Naive thymus-derived CD4-positive, alpha-beta T cell (primary cell): ENCODE measurements at regions of chr1 and their contacts with region 1.

Region 1: DNA sequence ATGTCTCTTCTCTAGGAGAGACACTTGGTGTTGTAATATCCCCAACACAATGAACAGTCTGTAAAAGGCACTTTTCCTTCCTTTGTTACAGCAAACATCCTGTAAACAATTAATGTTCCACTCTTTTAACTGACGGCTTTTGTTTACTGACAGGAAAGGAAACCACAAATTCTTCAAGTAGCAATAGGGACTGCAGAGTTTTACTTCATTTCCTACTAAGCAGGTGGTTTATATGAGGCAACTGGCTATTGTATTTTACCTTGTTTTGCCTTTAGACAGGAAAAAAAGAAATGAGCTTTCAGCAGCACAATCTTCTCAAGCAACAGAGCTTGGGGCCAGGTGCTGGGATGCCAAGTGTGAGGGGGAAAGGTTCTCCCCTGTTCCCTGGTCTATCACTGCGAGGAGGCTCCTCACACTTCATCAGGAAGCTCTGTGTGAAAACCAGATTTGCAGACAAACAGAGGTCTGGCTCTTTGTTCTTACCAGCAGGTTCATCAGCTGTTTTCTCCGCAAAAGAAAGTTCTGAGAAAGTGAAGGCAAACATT is 51.2 kb downstream of the SIPA1L2 start:
- DNase-seq: peak in 5 of 9 donors; percentile 14 to 52 (median 21)
- ATAC-seq: peak; percentile 59
- H3K4me3 ChIP-seq: peak overlapping the region; percentile 31
- H3K4me3 Mint-ChIP-seq: peak overlapping the region; percentile 42 to 79 (median 60)
- H3K27ac ChIP-seq: peak overlapping the region; percentile 18
- H3K27ac Mint-ChIP-seq: peak overlapping the region; percentile 15 to 90 (median 49)
- H3K4me1 ChIP-seq: peaks cover 21 to 27% of the 10 kb centered on the region in 2 donors
- H3K4me1 Mint-ChIP-seq: peaks cover 19 to 54% (median 29%) of the 10 kb centered on the region in 7 donors
- H3K27me3 ChIP-seq: no peaks in the 10 kb centered on the region
- H3K27me3 Mint-ChIP-seq: peaks cover 0 to 5% (median 0%) of the 10 kb centered on the region in 5 donors

Region 2: DNA sequence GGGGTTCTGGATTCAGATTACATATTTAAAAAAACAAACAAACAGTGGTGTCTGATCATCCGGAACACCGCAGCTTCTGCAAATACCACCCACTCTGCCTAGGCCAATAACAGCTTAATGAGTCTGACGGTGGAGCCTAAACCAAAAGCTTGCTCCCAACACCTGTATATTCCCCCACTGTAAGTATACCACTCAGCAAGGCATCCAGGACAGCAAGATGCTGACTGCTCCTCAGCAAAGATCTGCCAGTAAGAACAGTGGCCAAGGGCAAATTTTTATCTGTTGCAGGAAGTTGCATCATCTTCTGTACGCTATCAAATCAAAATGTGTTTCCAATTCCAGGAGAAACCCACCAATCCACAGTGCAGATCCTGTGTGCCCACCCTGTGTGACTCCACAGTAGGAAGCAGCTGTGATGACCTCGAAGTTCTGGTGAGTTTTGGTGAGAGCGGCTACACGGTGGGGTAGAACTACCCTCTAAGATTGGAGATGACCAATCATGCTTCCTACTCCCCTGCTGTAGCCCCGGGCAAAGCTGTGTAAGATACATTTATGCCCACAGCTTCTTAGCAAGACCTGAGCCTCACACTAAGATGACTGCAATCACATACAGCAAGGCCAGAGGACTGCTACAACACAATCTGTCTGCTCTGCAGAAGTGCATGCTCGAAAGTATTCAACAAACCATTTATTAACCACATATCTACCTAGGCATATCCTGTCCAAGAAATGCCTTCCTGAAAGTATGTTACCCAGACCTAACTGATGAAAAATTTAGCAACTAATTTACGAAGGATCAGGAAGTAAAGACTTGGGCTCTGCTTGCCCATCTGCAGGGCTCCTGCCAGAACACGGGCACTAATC is 20.7 kb after region 1 on chr1:
- CTCF ChIA-PET with region 1: no interaction called
- POLR2A ChIA-PET with region 1: no interaction called
- intact Hi-C with region 1: loop called in 1 of 2 experiments (anchors 1 kb)
- DNase-seq: no peak
- ATAC-seq: peak; percentile 27
- H3K4me3 ChIP-seq: no peak overlapping the region
- H3K4me3 Mint-ChIP-seq: peak overlapping the region in 1 of 10 donors; percentile 55
- H3K27ac ChIP-seq: no peak overlapping the region
- H3K27ac Mint-ChIP-seq: peak overlapping the region in 1 of 9 donors; percentile 76
- H3K4me1 ChIP-seq: peaks cover 0 to 19% of the 10 kb centered on the region in 2 donors
- H3K4me1 Mint-ChIP-seq: peaks cover 0 to 48% (median 0%) of the 10 kb centered on the region in 7 donors
- H3K27me3 ChIP-seq: no peaks in the 10 kb centered on the region
- H3K27me3 Mint-ChIP-seq: no peaks in the 10 kb centered on the region

Region 3: GRCh38 chr1:232643251-232643650 is 64.5 kb after region 1 on chr1:
- CTCF ChIA-PET with region 1: no interaction called
- POLR2A ChIA-PET with region 1: no interaction called
- intact Hi-C with region 1: no loop called
- DNase-seq: no peak
- ATAC-seq: no peak
- H3K4me3 ChIP-seq: no peak overlapping the region
- H3K4me3 Mint-ChIP-seq: no peak overlapping the region
- H3K27ac ChIP-seq: no peak overlapping the region
- H3K27ac Mint-ChIP-seq: no peak overlapping the region
- H3K4me1 ChIP-seq: no peaks in the 10 kb centered on the region
- H3K4me1 Mint-ChIP-seq: no peaks in the 10 kb centered on the region
- H3K27me3 ChIP-seq: no peaks in the 10 kb centered on the region
- H3K27me3 Mint-ChIP-seq: peaks cover 0 to 8% (median 4%) of the 10 kb centered on the region in 5 donors